Mammary epithelial cell (primary cell): ENCODE measurements at regions of chr9 and their contacts with region 1.

Region 1: DNA sequence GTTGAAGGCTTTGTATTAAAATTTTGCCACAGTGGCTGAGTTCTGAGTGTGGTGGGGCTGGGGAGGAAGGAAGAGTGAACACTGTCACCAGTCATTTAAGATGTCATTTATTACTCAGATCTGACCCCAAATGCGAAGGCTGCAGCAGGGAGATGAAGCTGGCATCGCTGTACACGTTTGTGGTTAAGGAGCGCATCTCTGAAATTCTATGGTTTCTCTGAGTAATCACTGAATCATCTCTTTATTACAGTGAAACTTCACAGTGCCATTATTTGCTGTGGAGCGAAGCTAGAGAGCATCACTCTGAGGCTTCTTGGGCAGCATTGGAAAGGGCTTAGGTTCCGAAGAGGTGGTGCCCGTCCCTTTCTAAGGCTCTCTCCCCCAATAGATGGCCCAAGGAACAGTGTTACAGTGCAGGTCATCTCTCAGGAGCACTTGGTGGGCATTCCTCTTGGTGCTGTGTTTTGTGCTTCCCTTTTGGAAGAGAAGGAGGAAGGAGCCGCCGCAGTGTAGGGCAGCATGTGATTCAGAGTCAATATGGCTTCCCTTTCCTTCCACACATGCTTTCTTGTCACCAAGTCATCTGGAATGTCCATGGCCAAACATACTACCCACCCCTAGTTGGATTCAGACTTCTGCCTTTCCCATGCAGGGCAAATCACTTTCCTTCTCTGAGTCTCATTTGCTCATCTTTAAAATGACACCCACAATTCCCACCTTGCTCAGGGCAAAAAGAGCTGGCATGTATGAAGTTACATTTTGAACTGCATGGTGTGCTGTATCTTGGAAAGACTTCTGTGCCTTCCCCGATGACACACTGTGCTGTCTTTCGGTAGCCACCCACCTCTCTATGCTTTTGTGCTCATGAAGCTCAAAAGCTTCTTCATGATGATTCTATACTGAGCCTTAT is 9.3 kb upstream of the TEX48 start:
- DNase-seq: peak; percentile 95
- H3K4me3 ChIP-seq: no peak overlapping the region
- H3K27ac ChIP-seq: peak overlapping the region; percentile 93
- H3K4me1 ChIP-seq: peaks cover 44% of the 10 kb centered on the region
- H3K27me3 ChIP-seq: no peaks in the 10 kb centered on the region
- CTCF ChIP-seq: no peak

Region 2: DNA sequence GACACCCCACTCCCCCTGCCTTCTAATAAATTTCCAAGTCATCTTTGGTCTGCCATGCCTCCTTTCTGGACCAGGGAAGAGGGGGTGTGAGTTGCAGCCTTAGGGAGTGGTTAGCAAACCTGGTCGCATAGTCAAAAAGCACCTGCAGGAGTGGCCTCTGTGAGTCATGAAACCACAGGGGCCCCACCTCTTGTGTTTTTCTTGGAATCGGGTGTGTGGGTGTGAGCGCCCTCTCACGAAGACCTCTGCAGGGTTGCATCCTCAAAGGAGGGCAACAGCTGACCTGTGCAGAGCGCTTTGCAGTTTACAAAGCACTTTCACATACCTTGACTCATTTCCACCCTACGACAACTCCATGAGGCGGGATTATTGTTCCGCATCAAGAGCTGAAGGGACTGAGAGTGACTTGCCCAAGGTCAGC is 27.5 kb after region 1 on chr9:
- CTCF ChIA-PET with region 1: no interaction called
- dilution Hi-C with region 1: no loop called
- in situ Hi-C with region 1: no loop called
- intact Hi-C with region 1: loop called (anchors 2 kb)
- DNase-seq: peak; percentile 97
- H3K4me3 ChIP-seq: no peak overlapping the region
- H3K27ac ChIP-seq: peak overlapping the region; percentile 53
- H3K4me1 ChIP-seq: peaks cover 46% of the 10 kb centered on the region
- H3K27me3 ChIP-seq: no peaks in the 10 kb centered on the region
- CTCF ChIP-seq: peak in 1 of 2 donors; percentile 38

Region 3: DNA sequence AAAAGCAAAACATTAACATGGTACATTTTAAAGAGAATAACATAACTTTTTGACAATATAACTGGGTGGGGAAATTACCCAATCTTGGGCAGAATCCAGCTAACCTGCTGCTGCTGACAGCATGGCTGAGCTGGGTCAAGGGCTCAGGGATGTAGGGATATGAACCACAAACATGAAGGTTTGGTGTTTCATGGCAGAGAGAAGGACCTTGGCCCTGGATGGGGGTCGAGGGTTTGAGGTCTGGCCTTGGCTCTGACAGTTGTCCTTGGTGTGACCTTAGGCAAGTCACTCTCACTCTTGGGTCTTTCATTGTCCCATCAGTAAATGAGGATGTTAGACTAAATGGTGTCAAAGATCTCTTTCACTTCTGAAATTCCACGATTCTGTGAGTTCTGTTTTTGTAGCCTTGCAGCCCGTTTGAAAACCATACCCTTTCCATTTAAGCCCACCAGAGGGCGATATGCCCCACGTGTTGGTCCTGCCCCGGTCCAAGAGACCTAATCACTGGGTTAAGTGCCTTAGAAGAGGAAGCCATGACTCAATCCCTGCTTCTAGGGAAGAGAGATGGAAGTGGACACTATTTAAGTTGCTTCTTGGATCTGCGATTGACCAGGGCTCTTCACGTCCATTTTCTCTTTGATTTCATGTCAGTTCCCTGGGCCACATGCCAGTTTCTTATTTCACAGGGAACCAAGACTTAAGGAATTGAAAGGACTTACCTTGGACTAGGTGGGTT is 47.4 kb after region 1 on chr9:
- CTCF ChIA-PET with region 1: no interaction called
- dilution Hi-C with region 1: no loop called
- in situ Hi-C with region 1: loop called (anchors 5 kb)
- intact Hi-C with region 1: loop called (anchors 1 kb)
- DNase-seq: peak; percentile 78
- H3K4me3 ChIP-seq: no peak overlapping the region
- H3K27ac ChIP-seq: no peak overlapping the region
- H3K4me1 ChIP-seq: peaks cover 5% of the 10 kb centered on the region
- H3K27me3 ChIP-seq: no peaks in the 10 kb centered on the region
- CTCF ChIP-seq: peak; percentile 71 to 81

Region 4: DNA sequence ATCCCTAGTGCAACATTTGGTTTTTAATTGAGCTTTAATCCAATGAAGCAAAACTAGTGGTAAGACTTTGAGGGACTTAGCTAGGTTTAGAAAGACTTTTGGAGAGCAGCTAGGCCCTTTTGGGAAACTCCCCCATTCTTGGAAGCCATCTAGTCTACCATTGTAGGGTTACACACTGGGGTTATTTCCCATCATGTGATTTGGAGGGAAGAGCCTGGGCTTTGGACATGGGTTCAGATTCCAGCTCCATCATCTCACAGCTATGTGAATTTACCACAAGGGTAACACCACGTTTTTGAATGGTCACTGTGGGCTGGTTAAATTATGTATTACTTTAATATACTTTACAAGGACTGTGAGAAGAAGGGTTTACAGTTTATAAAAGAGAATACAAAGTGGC is 132.8 kb after region 1 on chr9:
- CTCF ChIA-PET with region 1: no interaction called
- dilution Hi-C with region 1: no loop called
- in situ Hi-C with region 1: no loop called
- intact Hi-C with region 1: no loop called
- DNase-seq: peak; percentile 71
- H3K4me3 ChIP-seq: no peak overlapping the region
- H3K27ac ChIP-seq: no peak overlapping the region
- H3K4me1 ChIP-seq: no peaks in the 10 kb centered on the region
- H3K27me3 ChIP-seq: no peaks in the 10 kb centered on the region
- CTCF ChIP-seq: no peak